ENCODE measurements at regions of chr19 and their contacts with region 1.

Region 1: DNA sequence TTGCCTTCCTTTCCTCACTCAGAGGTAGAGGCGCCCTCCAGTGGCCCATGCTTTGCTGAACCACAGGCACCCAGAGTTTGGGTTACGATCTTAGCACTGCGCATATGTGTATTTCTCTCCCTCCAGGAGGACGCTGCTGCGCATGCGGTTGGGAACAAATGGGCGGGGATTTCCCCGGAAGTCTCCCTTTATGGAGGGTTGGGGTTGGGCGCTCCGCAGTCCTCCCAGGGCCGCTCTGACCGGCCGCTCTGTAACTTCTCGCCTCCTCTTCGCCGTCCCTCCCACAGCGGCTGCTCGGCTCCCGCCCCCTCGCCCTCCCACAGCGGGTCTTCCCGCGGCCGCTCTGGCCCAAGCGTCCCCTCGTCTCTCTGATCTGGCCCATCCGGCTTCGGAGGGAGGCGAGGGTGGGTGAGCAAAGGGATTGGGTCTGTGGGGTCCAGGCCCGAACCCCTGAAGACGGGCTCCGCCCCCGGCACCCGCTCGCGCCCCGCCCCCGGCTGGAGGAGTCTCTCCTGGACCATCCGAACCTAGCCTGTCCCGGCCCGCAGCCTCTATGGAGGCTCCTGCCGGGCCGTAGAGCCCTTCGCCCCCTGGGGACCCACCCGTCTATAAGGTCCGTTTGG is at the start of gene MEGF8:
- DNase-seq: peak; percentile 99
- H3K4me3 ChIP-seq: peak within 1 kb of the TSS; percentile 94
- H3K27ac ChIP-seq: peak within 1 kb of the TSS; percentile 63
- H3K4me1 ChIP-seq: peaks cover 4% of the 10 kb centered on the region
- H3K27me3 ChIP-seq: peaks cover 20% of the 10 kb centered on the region
- CTCF ChIP-seq: peak; percentile 80
- total RNA-seq, gene MEGF8: 13.4 to 16.5 TPM

Region 2: GRCh38 chr19:42396381-42397262 is 71.2 kb after region 1 on chr19:
- intact Hi-C with region 1: loop called (anchors 10 kb)
- DNase-seq: peak; percentile 99
- H3K4me3 ChIP-seq: peak overlapping the region; percentile 50
- H3K27ac ChIP-seq: peak overlapping the region; percentile 65
- H3K4me1 ChIP-seq: no peaks in the 10 kb centered on the region
- H3K27me3 ChIP-seq: no peaks in the 10 kb centered on the region
- CTCF ChIP-seq: no peak

Measured in colonic mucosa (tissue), 4 donors.